Mammary epithelial cell (primary cell): ENCODE measurements at regions of chr10 and their contacts with region 1.

Region 1: DNA sequence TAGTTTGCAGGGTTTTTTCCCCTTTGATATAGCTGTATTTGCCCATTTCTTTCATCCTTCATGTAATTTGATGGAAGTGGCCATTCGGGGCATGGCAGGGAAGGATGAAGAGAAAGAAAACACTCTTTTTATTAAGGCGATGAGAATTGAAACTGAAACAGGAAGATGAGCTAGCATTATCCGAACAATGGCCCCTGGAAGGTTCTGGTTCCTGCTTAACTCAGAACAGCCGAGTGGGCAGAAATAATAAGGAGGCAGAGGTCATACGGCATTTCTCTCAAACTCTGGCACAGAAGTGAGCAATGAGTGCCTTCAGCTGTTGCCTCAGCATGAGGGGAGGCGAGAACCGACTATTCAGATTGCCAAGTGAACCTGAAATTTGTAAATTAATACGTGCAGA is 113.2 kb upstream of the MYO3A start:
- DNase-seq: no peak
- H3K4me3 ChIP-seq: no peak overlapping the region
- H3K27ac ChIP-seq: no peak overlapping the region
- H3K4me1 ChIP-seq: no peaks in the 10 kb centered on the region
- H3K27me3 ChIP-seq: no peaks in the 10 kb centered on the region
- CTCF ChIP-seq: no peak

Region 2: GRCh38 chr10:25858076-25858475 is 37.2 kb after region 1 on chr10:
- CTCF ChIA-PET with region 1: no interaction called
- dilution Hi-C with region 1: loop called (anchors 5 kb)
- in situ Hi-C with region 1: no loop called
- intact Hi-C with region 1: no loop called
- DNase-seq: no peak
- H3K4me3 ChIP-seq: no peak overlapping the region
- H3K27ac ChIP-seq: no peak overlapping the region
- H3K4me1 ChIP-seq: no peaks in the 10 kb centered on the region
- H3K27me3 ChIP-seq: no peaks in the 10 kb centered on the region
- CTCF ChIP-seq: no peak